Activated CD4-positive, alpha-beta T cell treated with anti-CD3 and anti-CD28 coated beads, Interleukin-2, amount 10 ng/mL, durations not matched to agents 24 days and 14 days (primary cell): ENCODE measurements at regions of chr11 and their contacts with region 1.

Region 1: DNA sequence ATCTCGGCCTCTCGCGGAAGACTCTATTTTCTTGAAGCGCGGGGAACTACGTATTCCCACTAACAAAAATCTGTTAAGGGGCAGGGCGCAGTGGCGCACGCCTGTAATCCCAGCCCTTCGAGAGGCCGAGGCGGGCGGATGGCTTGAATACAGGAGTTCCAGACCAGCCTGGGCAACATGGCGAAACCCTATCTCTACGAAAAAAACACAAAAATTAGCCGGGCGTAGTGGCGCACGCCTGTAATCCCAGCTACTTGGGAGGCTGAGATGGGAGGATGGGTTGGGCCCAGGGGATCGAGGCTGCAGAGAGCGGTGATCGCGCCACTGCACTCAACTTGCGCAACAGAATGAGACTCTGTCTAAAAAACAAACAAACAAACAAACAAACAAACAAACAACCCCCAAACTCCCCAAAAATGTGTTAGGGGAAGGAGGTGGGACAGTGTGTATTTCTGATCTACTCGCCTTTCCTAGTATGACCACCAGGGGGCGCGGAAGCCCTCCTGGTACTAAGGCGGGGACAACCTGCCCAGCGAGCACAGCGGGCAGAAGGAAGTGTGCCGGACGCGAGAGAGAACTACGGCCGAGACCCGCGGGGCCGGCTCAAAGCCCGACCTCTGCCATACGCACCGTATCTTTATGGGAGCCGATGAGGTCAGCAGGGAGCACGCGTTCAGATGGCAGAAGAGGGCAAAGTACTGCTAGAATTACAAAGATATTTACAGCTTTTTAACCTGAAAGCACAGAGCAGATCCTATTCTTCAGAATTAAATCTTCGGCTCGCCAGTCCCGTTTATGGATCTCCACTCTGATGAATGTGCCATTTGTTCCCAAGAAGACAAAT is 1.3 kb upstream of the STX3 start:
- DNase-seq: peak; percentile 96
- H3K4me3 Mint-ChIP-seq: peak overlapping the region; percentile 96
- H3K27ac Mint-ChIP-seq: peak overlapping the region; percentile 90
- H3K4me1 Mint-ChIP-seq: peaks cover 37% of the 10 kb centered on the region
- H3K27me3 Mint-ChIP-seq: peaks cover 4% of the 10 kb centered on the region

Region 2: DNA sequence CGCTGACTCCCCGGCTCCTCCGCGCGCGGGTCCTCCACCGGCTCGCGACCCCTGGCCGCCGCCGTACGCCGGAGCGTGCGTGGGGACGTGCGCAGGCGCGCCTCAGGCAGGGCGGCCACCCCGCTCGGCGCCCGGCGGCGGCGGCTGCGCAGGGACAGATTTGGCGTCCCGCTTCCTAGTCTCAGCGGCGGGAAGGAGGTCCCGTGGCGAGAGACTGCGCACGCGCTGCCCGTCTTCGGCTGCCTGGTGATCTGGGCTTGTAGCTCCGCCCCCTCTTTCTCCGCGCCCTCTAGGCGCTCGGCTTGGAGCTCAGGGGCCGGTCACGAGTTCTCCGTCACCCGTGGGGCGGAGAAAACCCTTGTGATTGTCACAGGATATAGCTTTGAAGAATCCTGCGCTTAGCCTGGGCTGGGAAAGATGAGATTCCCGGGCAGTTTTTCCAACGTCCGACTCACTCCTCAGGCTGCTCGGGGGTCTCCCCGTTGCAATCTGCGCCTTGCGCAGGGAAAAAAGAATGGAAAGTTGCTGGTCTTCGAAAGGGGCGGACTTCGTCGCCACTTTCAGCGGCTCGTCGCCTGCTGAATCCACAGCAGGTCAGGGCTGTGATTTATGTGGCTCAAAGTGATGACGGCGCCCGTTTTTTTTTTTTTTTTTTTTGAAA is 84.8 kb before region 1 on chr11 and contains the start of gene PATL1:
- intact Hi-C with region 1: loop called (anchors 1 kb)
- DNase-seq: peak; percentile 100
- H3K4me3 Mint-ChIP-seq: peak within 1 kb of the TSS; percentile 98
- H3K27ac Mint-ChIP-seq: peak within 1 kb of the TSS; percentile 97
- H3K4me1 Mint-ChIP-seq: peaks cover 40% of the 10 kb centered on the region
- H3K27me3 Mint-ChIP-seq: peaks cover 1% of the 10 kb centered on the region
- total RNA-seq, gene PATL1: 72.4 and 76.1 TPM in 2 replicates

Region 3: DNA sequence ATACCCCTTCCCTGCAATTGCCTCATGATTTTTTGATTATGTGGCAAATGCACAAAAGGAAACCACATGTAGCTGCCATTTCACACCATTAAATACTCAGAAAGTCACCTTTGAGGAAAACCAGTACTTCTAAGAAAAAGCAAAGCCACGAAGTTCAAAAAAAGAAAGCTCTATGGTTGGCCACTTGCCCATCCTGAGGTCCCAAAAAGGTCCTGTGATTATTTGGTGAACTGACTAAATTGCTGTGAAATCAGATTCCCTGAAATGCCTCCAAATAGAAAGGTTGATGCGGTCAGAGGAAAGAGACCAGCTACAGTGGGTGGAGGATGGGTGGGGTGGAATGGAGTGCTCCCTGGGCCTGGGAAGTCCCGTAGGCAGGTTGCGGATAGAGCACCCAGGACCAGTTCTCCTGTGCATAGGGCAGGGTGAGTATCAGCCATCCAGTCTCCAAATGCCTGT is 29.8 kb after region 1 on chr11:
- intact Hi-C with region 1: loop called (anchors 1 kb)
- DNase-seq: peak; percentile 70
- H3K4me3 Mint-ChIP-seq: peak overlapping the region; percentile 36
- H3K27ac Mint-ChIP-seq: peak overlapping the region; percentile 62
- H3K4me1 Mint-ChIP-seq: peaks cover 46% of the 10 kb centered on the region
- H3K27me3 Mint-ChIP-seq: no peaks in the 10 kb centered on the region

Region 4: DNA sequence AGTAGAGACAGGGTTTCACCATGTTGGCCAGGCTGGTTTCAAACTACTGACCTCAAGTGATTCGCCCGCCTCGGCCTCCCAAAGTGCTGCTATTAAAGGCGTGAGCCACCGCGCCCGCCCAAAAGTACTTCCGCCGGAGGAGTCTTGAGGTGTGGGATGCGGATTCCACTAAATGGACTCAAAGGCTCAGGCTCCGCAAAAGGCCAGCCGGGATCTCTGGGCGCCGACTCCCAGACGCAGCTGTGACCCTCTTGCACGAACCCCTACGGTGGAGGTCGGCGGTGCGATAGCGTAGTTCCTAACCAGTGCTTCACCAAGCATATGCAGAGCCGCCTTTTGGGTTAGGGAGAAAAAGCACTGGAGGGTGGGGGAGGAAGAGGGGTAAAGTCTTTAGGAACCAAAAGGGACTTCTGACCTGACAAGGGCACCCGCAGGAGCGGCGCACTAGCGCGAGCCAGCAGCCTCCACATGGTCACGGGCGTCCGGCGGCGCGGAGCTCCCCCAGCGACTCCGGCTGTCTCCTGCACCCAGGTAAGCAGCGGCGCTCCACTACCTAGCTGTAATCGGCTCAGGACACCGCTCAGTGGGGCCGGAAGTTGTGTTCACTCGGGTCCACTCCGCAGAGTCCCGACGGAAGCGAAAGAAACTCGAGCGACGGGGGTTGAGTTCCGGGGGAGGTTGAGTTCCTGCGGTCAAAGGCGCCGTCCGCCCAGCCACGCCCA is 56.5 kb after region 1 on chr11 and contains the start of gene MRPL16:
- intact Hi-C with region 1: loop called (anchors 2 kb)
- DNase-seq: peak; percentile 95
- H3K4me3 Mint-ChIP-seq: peak within 1 kb of the TSS; percentile 92
- H3K27ac Mint-ChIP-seq: peak within 1 kb of the TSS; percentile 91
- H3K4me1 Mint-ChIP-seq: peaks cover 22% of the 10 kb centered on the region
- H3K27me3 Mint-ChIP-seq: no peaks in the 10 kb centered on the region
- total RNA-seq, gene MRPL16: 96.8 and 97.4 TPM in 2 replicates

Region 5: GRCh38 chr11:60193687-60194433 is 440.0 kb after region 1 on chr11:
- intact Hi-C with region 1: loop called (anchors 10 kb)
- DNase-seq: peak; percentile 88
- H3K4me3 Mint-ChIP-seq: no peak overlapping the region
- H3K27ac Mint-ChIP-seq: no peak overlapping the region
- H3K4me1 Mint-ChIP-seq: peaks cover 7% of the 10 kb centered on the region
- H3K27me3 Mint-ChIP-seq: peaks cover 3% of the 10 kb centered on the region